Endothelial cell of umbilical vein (primary cell): ENCODE measurements at regions of chr11 and their contacts with region 1.

Region 1: DNA sequence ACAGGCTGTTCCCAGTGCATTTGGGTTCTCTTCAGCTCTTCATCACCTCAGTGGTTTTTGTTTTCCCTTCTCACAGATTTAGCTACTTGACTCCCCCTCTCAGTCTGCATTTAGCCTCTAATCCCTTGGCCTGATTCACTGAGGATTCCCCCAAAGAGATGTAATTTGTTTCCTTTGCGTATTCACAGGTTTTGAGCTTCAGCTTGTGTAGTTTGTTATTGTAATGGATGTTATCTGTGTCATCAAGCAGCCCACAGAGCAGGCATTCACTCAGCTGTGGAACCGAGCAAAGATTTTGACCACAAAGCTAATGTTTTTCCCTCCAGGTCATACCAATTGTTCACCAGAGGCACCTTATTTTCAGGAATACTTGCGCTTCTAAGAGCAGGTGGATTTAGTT is 6.4 kb upstream of the ME3 start:
- DNase-seq: no peak
- H3K4me3 ChIP-seq: no peak overlapping the region
- H3K27ac ChIP-seq: no peak overlapping the region
- H3K4me1 ChIP-seq: peaks cover 7% of the 10 kb centered on the region
- H3K27me3 ChIP-seq: no peaks in the 10 kb centered on the region
- CTCF ChIP-seq: no peak
- POLR2A ChIP-seq: no peak

Region 2: DNA sequence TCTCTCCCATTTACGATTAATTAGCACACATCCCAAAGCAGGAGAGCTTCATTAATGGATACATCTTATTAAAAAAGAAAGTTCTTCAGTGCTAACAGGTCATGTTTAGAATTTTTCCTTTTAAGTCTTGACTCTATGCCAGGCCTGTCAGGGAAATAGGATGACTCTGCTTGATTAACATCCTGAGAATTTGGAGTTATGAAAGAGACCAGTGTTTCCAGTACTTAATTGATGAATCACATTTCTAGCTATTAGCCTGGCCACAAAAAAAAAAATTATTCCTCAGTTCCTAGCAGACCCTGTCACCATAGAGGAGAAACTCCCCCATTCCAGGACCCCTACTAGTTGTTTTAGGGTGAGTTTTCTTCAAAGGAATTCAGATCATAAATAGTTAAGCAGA is 17.2 kb after region 1 on chr11:
- CTCF ChIA-PET with region 1: interaction called, 16 read pairs
- POLR2A ChIA-PET with region 1: no interaction called
- dilution Hi-C with region 1: no loop called
- intact Hi-C with region 1: no loop called
- DNase-seq: peak; percentile 84
- H3K4me3 ChIP-seq: no peak overlapping the region
- H3K27ac ChIP-seq: peak overlapping the region; percentile 56
- H3K4me1 ChIP-seq: peaks cover 15% of the 10 kb centered on the region
- H3K27me3 ChIP-seq: no peaks in the 10 kb centered on the region
- CTCF ChIP-seq: no peak
- POLR2A ChIP-seq: no peak